IMR-90 (cell line): ENCODE measurements at regions of chr13 and their contacts with region 1.

Region 1: GRCh38 chr13:20814224-20814910 is 40.6 kb upstream of the EEF1AKMT1 start:
- DNase-seq: peak; percentile 96
- ATAC-seq: peak; percentile 77
- H3K4me3 ChIP-seq: no peak overlapping the region
- H3K27ac ChIP-seq: peak overlapping the region; percentile 25; the same call in 1 of the 2 replicates
- H3K4me1 ChIP-seq: peaks cover 7% of the 10 kb centered on the region
- H3K27me3 ChIP-seq: no peaks in the 10 kb centered on the region
- CTCF ChIP-seq: no peak
- POLR2A ChIP-seq: no peak
- RAD21 ChIP-seq: no peak

Region 2: GRCh38 chr13:20773194-20774080 is 40.9 kb before region 1 on chr13 and contains the start of gene EEF1AKMT1:
- CTCF ChIA-PET with region 1: no interaction called
- POLR2A ChIA-PET with region 1: no interaction called
- dilution Hi-C with region 1: no loop called
- in situ Hi-C with region 1: no loop called
- intact Hi-C with region 1: loop called (anchors 2 kb)
- DNase-seq: peak; percentile 91
- ATAC-seq: peak; percentile 97
- H3K4me3 ChIP-seq: peak within 1 kb of the TSS; percentile 58
- H3K27ac ChIP-seq: peak within 1 kb of the TSS; percentile 85
- H3K4me1 ChIP-seq: peaks cover 2% of the 10 kb centered on the region; the same call in 1 of the 2 replicates
- H3K27me3 ChIP-seq: no peaks in the 10 kb centered on the region
- CTCF ChIP-seq: no peak
- POLR2A ChIP-seq: peak; percentile 52
- RAD21 ChIP-seq: no peak
- total RNA-seq, gene EEF1AKMT1: 10.6 and 11.7 TPM in 2 replicates

Region 3: DNA sequence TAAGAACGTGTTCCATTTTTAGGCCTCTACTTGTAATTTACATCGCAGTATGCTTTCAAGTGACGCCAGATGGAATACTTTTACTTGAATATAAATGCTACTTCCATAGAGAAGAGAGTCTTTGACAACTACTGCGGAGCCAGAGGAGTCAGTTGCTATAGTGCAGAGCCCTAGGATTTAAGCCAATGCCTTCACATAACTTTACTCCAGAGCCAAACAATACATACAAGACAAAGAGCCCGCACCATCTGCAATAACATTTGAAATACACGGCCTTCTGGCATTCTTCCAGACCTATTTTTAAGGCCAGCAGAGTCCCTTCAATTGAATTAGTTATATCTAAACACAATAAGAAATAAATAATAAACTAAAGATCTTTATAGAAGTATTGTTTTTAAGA is 28.8 kb after region 1 on chr13:
- CTCF ChIA-PET with region 1: no interaction called
- POLR2A ChIA-PET with region 1: no interaction called
- dilution Hi-C with region 1: no loop called
- in situ Hi-C with region 1: no loop called
- intact Hi-C with region 1: no loop called
- DNase-seq: peak; percentile 18
- ATAC-seq: no peak
- H3K4me3 ChIP-seq: no peak overlapping the region
- H3K27ac ChIP-seq: no peak overlapping the region
- H3K4me1 ChIP-seq: 0 out of 2 replicates have a peak, but pooled peaks cover 2% of the 10 kb centered on the region
- H3K27me3 ChIP-seq: no peaks in the 10 kb centered on the region
- CTCF ChIP-seq: no peak
- POLR2A ChIP-seq: no peak
- RAD21 ChIP-seq: no peak

Region 4: DNA sequence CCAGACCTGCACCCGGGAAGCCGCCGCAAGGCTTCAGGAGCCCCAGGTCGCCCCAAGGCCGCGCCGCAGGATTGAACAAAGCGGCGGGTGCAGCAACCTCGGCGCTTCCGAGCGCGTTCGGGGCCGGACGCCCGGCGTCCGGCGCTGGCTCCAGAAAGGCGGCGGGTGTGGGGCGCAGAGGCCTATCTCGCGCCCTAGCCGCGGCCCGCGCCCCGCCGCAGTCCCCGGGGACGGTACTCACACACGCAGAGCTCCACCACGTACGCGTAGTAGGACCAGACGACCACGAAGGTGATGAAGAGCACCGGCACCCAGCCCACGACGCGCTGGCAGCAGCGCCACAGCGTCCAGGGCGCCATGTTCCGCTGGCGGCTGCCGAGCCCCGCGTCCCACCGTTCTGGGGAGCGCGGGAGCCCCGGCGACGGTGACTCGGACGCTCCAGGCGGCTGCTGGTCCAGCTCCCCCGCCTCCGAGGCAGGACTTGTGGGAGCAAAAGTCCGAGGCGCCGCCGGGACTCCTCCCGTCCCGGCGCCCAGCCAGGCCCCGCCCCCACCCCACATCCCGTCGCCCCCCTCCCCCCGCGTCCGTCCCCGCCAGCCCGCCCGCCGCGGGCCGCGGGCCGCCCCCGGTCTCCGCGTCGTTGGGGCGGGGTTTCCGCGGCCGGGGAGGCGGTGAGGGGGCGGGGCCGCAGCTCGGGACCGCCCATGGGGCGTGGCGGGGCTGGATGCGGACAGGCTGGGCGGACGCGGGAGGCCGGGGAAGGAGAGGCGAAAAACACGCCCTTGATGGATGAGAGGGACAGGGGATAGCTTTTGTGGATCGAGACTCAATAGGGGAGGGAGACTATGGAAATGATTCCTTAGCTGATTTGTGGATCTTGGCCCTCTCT is 644.7 kb after region 1 on chr13 and contains the start of gene ZDHHC20:
- CTCF ChIA-PET with region 1: no interaction called
- POLR2A ChIA-PET with region 1: no interaction called
- dilution Hi-C with region 1: no loop called
- in situ Hi-C with region 1: no loop called
- intact Hi-C with region 1: no loop called
- DNase-seq: peak; percentile 78
- ATAC-seq: peak; percentile 98
- H3K4me3 ChIP-seq: peak within 1 kb of the TSS; percentile 88
- H3K27ac ChIP-seq: peak within 1 kb of the TSS; percentile 76
- H3K4me1 ChIP-seq: no peaks in the 10 kb centered on the region
- H3K27me3 ChIP-seq: no peaks in the 10 kb centered on the region
- CTCF ChIP-seq: no peak
- POLR2A ChIP-seq: peak; percentile 71
- RAD21 ChIP-seq: 0 out of 2 replicates have a peak, but pooled peaks have one; percentile 4
- total RNA-seq, gene ZDHHC20: 72.4 and 104 TPM in 2 replicates